ENCODE measurements at regions of chr6 and their contacts with region 1.

Region 1: DNA sequence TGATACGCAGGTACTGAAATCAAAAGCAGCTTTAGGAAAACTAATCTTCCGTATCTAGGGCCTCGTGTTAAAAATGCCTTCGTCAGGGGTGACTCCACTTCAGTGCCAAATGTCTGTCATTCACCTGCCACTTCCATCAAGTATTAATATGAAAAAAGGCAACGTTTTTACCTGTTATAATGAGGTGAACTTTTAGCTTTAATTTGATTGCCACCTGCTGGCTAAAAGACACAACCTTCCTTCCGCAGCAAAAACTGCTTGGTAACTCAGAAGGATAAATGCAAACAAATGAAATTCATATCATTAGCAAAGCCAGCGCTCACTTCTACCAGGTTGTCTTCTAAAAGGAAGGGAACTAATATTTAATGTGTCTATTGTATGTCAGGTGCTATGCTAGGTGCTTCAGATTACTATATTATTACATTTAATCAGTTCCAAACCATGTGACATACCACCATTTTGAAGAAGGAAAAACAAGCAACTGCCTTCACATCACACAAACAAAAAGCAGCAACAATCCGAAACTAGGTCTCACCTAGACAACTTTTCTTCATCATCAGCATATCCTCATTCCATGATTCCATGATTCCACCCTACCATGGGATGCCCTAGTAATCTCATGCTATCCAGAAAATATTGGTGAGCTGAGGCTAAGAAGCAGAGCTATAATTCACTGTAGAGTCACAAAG is 20.6 kb upstream of the ARHGAP18 start:
- DNase-seq: no peak
- ATAC-seq: peak; percentile 87
- H3K4me3 ChIP-seq: no peak overlapping the region
- H3K27ac ChIP-seq: peak overlapping the region; percentile 43; the same call in 1 of the 2 replicates
- H3K4me1 ChIP-seq: no peaks in the 10 kb centered on the region
- H3K27me3 ChIP-seq: no peaks in the 10 kb centered on the region
- CTCF ChIP-seq: peak; percentile 57 to 70 (median 65)
- EP300 ChIP-seq: no peak
- POLR2A ChIP-seq: no peak
- RAD21 ChIP-seq: peak; percentile 96

Region 2: GRCh38 chr6:129606664-129607063 is 124.0 kb before region 1 on chr6:
- CTCF ChIA-PET with region 1: interaction called, 411 read pairs
- POLR2A ChIA-PET with region 1: no interaction called
- RAD21 ChIA-PET with region 1: interaction called, 268 read pairs
- SMC1A ChIA-PET with region 1: interaction called, 407 read pairs
- in situ Hi-C with region 1: no loop called
- intact Hi-C with region 1: no loop called
- DNase-seq: peak; percentile 59
- ATAC-seq: peak; percentile 87
- H3K4me3 ChIP-seq: no peak overlapping the region
- H3K27ac ChIP-seq: peak overlapping the region; percentile 80
- H3K4me1 ChIP-seq: peaks cover 31% of the 10 kb centered on the region
- H3K27me3 ChIP-seq: no peaks in the 10 kb centered on the region
- CTCF ChIP-seq: no peak
- EP300 ChIP-seq: peak; percentile 34 to 51; a peak in 2 of 4 replicates
- POLR2A ChIP-seq: no peak
- RAD21 ChIP-seq: 0 out of 2 replicates have a peak, but pooled peaks have one; percentile 11

Region 3: GRCh38 chr6:129646642-129647041 is 84.0 kb before region 1 on chr6:
- CTCF ChIA-PET with region 1: interaction called, 5 read pairs
- POLR2A ChIA-PET with region 1: no interaction called
- RAD21 ChIA-PET with region 1: interaction called, 10 read pairs
- SMC1A ChIA-PET with region 1: interaction called, 13 read pairs
- in situ Hi-C with region 1: no loop called
- intact Hi-C with region 1: no loop called
- DNase-seq: peak; percentile 61
- ATAC-seq: peak; percentile 84
- H3K4me3 ChIP-seq: no peak overlapping the region
- H3K27ac ChIP-seq: peak overlapping the region; percentile 65
- H3K4me1 ChIP-seq: peaks cover 42% of the 10 kb centered on the region
- H3K27me3 ChIP-seq: no peaks in the 10 kb centered on the region
- CTCF ChIP-seq: no peak
- EP300 ChIP-seq: peak in 1 of 2 experiments; percentile 77; a peak in 2 of 4 replicates
- POLR2A ChIP-seq: no peak
- RAD21 ChIP-seq: no peak

Region 4: GRCh38 chr6:129701721-129702455 is 28.7 kb before region 1 on chr6:
- CTCF ChIA-PET with region 1: interaction called, 36 read pairs
- POLR2A ChIA-PET with region 1: interaction called, 3 read pairs
- RAD21 ChIA-PET with region 1: interaction called, 11 read pairs
- SMC1A ChIA-PET with region 1: interaction called, 247 read pairs
- in situ Hi-C with region 1: no loop called
- intact Hi-C with region 1: no loop called
- DNase-seq: no peak
- ATAC-seq: no peak
- H3K4me3 ChIP-seq: peak overlapping the region; percentile 30; the same call in 1 of the 2 replicates
- H3K27ac ChIP-seq: peak overlapping the region; percentile 14; the same call in 1 of the 2 replicates
- H3K4me1 ChIP-seq: peaks cover 37% of the 10 kb centered on the region
- H3K27me3 ChIP-seq: no peaks in the 10 kb centered on the region
- CTCF ChIP-seq: no peak
- EP300 ChIP-seq: no peak
- POLR2A ChIP-seq: no peak
- RAD21 ChIP-seq: no peak

Region 5: GRCh38 chr6:129748212-129748900 is 17.7 kb after region 1 on chr6:
- CTCF ChIA-PET with region 1: interaction called, 70 read pairs
- POLR2A ChIA-PET with region 1: interaction called, 4 read pairs
- RAD21 ChIA-PET with region 1: interaction called, 45 read pairs
- SMC1A ChIA-PET with region 1: interaction called, 28 read pairs
- in situ Hi-C with region 1: no loop called
- intact Hi-C with region 1: loop called (anchors 2 kb)
- DNase-seq: peak; percentile 82
- ATAC-seq: peak; percentile 85
- H3K4me3 ChIP-seq: peak overlapping the region; percentile 56
- H3K27ac ChIP-seq: peak overlapping the region; percentile 96
- H3K4me1 ChIP-seq: peaks cover 42% of the 10 kb centered on the region
- H3K27me3 ChIP-seq: no peaks in the 10 kb centered on the region
- CTCF ChIP-seq: no peak
- EP300 ChIP-seq: 0 out of 4 replicates have a peak, but pooled peaks of 1 of the 2 experiments have one; percentile 29
- POLR2A ChIP-seq: peak; percentile 51
- RAD21 ChIP-seq: no peak

Region 6: DNA sequence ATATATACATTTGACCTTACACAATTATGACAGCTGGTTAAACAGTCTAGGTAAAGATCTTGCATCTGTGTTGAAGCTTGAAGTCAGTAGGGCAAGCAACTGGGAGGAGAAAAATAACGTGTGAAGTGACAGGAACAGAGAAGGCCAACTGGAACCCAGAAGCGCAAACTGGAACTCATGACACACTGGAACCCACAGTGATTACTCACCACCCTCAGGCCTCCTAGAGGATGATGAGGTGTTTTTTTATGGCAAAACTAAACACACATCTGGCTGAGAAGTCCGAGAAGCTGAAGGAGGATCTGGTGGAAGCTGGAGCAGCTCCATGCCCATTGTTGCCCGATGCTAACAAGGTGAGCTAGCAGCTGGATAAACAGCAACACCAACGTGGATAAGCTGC is 743.3 kb after region 1 on chr6:
- CTCF ChIA-PET with region 1: no interaction called
- POLR2A ChIA-PET with region 1: no interaction called
- RAD21 ChIA-PET with region 1: no interaction called
- SMC1A ChIA-PET with region 1: no interaction called
- in situ Hi-C with region 1: no loop called
- intact Hi-C with region 1: no loop called
- DNase-seq: no peak
- ATAC-seq: no peak
- H3K4me3 ChIP-seq: no peak overlapping the region
- H3K27ac ChIP-seq: no peak overlapping the region
- H3K4me1 ChIP-seq: no peaks in the 10 kb centered on the region
- H3K27me3 ChIP-seq: no peaks in the 10 kb centered on the region
- CTCF ChIP-seq: no peak
- EP300 ChIP-seq: no peak
- POLR2A ChIP-seq: no peak
- RAD21 ChIP-seq: no peak

Measured in GM12878 (cell line).